Right ventricle myocardium inferior (tissue), 1 donor: ENCODE measurements at regions of chr6 and their contacts with region 1.

Region 1: GRCh38 chr6:165884813-165885765 is 222.0 kb upstream of the PDE10A start:
- DNase-seq: peak; percentile 91
- ATAC-seq: peak; percentile 78

Region 2: DNA sequence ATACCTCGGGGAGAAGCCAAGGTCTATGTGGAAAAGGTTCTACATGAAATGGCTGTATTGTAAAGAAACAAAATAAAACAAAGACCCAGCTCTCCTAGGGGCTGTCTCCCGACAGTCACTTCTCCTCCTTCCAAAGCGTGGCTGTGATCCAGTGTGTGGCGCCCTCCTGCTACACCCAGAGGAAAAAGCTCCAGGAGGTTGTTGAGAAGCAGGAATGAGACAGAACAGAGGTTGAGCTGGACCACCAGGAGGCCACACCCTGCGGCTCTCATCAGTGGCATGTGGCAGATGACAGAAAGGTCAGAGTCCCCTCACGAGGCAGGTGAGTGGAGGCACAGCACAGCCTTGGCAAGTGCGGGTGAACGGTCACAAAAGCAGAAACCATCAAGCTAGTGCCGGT is 46.6 kb after region 1 on chr6:
- intact Hi-C with region 1: no loop called
- DNase-seq: no peak
- ATAC-seq: peak; percentile 14

Region 3: GRCh38 chr6:165987483-165988301 is 102.6 kb after region 1 on chr6:
- intact Hi-C with region 1: loop called (anchors 5 kb)
- DNase-seq: peak; percentile 91
- ATAC-seq: peak; percentile 88

Region 4: GRCh38 chr6:166005944-166006899 is 121.1 kb after region 1 on chr6:
- intact Hi-C with region 1: loop called (anchors 5 kb)
- DNase-seq: peak; percentile 78
- ATAC-seq: peak; percentile 80